Activated CD8-positive, alpha-beta T cell treated with anti-CD3 and anti-CD28 coated beads for 36 hours (primary cell): ENCODE measurements at regions of chr14 and their contacts with region 1.

Region 1: DNA sequence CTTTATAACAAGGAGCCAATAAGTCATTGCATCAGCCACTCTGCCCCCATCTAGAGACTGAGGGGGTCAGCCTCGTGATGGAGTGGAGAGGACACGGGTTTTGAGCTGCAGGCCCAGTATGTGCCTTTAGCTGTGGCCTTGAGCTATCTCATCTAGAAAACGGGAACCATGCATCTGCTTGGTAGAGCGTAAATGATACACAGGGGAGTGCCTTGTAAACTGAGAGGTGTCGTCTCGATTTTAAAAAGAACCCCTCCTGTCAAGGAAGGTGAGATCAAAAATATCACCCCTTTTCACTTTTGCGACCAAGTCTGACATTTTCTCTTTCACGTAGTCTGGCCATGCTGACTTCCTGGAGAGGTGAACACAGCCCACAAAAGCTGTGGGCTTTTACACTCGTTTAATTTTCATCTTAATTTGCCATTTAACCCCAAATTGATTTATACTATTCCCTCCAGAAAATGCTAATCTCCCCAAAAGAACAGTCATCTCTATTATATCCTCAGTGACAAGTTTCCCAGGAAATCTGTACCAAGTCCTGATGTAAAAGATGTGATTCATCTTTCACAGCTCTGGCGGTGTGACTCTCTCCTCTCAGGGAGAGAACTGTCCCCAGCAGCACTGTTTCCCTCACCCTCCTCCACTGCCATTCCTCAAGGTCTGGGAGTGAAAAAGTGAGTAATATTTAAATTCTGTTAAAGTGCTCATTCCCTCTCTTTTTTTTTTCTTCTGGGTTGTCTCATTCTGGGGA is 30.6 kb downstream of the VCPKMT start:
- DNase-seq: peak; percentile 62
- ATAC-seq: peak; percentile 24
- H3K4me3 Mint-ChIP-seq: peak overlapping the region; percentile 56
- H3K27ac Mint-ChIP-seq: peak overlapping the region; percentile 98
- H3K4me1 Mint-ChIP-seq: peaks cover 94% of the 10 kb centered on the region
- H3K27me3 Mint-ChIP-seq: no peaks in the 10 kb centered on the region
- CTCF ChIP-seq: no peak

Region 2: DNA sequence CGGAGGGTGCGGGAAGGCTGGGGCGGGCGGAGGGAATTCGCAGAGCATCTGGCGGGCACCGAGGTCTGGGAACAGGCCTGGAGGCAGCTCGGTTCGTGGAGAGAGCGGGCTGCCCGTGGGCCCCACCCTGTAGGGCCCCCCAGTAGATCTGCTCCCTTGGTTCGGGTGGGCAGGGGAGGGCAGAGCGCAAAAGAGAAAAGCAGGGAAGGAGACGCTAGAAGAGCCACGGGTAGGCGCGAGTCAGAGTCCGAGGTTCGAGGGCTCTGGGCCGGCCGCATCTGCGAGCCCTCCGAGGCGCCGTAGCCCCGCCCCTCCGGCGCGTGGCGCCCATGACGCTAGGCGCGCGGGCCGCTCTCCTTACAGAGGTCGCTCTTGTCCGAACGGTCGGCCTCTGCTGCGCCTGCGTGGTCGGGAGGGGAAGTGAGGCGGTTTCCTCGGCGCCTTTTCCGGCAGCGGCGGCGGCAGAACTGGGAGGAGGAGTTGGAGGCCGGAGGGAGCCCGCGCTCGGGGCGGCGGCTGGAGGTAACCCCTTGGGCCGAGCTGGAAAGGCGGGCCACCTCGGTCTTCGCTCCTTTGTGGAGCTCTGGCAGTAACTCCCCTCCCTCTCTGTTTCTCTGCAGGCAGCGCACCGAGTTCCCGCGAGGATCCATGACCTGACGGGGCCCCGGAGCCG is 193.0 kb before region 1 on chr14 and contains the start of gene ARF6:
- CTCF ChIA-PET with region 1: no interaction called
- POLR2A ChIA-PET with region 1: interaction called, 14 read pairs
- intact Hi-C with region 1: loop called (anchors 5 kb)
- DNase-seq: peak; percentile 98
- ATAC-seq: peak; percentile 80
- H3K4me3 Mint-ChIP-seq: peak within 1 kb of the TSS; percentile 88
- H3K27ac Mint-ChIP-seq: peak within 1 kb of the TSS; percentile 97
- H3K4me1 Mint-ChIP-seq: peaks cover 4% of the 10 kb centered on the region
- H3K27me3 Mint-ChIP-seq: no peaks in the 10 kb centered on the region
- CTCF ChIP-seq: no peak
- total RNA-seq, gene ARF6: 170 TPM

Region 3: DNA sequence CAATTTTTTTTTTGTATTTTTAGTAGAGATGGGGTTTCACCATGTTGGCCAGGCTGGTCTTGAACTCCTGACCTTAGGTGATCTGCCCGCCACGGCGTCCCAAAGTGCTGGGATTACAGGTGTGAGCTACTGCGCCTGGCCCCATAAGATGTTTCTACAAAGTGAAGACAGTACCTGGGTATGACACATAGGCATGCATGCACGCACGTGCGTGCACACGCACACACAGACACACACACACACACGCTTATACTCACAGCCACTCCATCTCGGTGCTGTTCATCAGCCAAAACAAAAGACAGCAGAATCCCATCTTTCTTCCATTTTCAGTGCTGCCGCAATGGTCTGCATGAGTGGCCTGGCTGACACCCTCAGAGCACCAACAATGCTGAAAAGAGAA is 33.2 kb before region 1 on chr14:
- CTCF ChIA-PET with region 1: no interaction called
- POLR2A ChIA-PET with region 1: no interaction called
- intact Hi-C with region 1: no loop called
- DNase-seq: no peak
- ATAC-seq: no peak
- H3K4me3 Mint-ChIP-seq: no peak overlapping the region
- H3K27ac Mint-ChIP-seq: no peak overlapping the region
- H3K4me1 Mint-ChIP-seq: peaks cover 16% of the 10 kb centered on the region
- H3K27me3 Mint-ChIP-seq: no peaks in the 10 kb centered on the region
- CTCF ChIP-seq: no peak

Region 4: DNA sequence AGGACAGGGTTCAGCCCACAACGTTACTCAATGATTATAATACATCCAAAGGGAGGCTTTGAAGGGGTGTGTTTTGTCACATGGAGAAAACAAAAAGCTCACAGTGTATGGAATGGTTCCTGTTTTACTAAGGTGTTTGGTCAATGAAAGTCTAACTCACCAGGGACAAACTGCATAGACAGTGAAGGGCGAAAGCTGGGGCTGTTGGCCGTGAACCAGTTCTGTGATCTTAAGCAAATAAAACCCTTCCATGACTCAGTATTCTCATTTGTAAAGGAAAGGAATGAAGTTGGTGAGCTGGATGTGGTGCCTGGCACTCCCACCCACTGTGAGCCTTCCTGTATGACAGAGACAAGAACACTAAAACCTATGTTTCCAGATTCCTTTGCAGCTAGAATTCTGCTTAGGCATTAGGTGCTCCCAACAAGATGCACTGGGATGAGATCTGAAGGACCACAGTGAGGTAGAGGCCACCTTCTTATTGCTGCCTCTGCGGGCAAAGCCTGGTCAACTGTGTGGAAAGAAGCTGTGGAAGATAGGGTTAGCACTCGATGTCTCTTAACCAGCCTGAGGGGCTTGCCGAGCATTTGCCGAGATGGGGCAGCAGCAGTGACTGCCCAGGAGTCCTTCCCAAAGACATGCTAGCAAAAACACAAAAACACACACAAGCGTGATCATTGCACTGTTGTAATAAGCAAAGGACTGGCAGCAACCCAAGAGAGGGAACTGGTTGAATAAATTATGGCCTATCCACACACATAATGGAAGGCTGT is 17.8 kb before region 1 on chr14:
- CTCF ChIA-PET with region 1: interaction called, 12 read pairs
- POLR2A ChIA-PET with region 1: interaction called, 39 read pairs
- intact Hi-C with region 1: no loop called
- DNase-seq: no peak
- ATAC-seq: no peak
- H3K4me3 Mint-ChIP-seq: no peak overlapping the region
- H3K27ac Mint-ChIP-seq: peak overlapping the region; percentile 16
- H3K4me1 Mint-ChIP-seq: peaks cover 75% of the 10 kb centered on the region
- H3K27me3 Mint-ChIP-seq: no peaks in the 10 kb centered on the region
- CTCF ChIP-seq: no peak

Region 5: DNA sequence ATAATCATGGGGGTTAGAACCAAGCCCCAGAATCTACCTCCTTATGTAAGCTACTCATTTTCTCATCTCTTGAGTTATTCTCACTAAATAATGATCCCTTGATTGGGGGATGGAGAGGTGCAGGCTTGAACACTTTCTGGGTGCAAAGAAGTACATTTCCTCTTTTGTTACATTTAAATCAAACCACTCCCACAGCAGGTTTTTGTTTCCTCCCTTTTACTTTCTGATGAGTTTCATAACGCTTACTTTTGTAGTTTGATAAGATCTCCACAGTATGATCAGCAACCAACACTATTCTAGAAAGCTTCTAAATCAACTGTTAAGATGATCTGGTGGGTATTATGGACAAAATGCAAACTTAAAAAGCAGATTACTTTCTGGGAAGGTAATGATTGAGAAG is 10.2 kb after region 1 on chr14:
- CTCF ChIA-PET with region 1: interaction called, 51 read pairs
- POLR2A ChIA-PET with region 1: interaction called, 13 read pairs
- intact Hi-C with region 1: no loop called
- DNase-seq: no peak
- ATAC-seq: peak; percentile 60
- H3K4me3 Mint-ChIP-seq: peak overlapping the region; percentile 31
- H3K27ac Mint-ChIP-seq: peak overlapping the region; percentile 87
- H3K4me1 Mint-ChIP-seq: peaks cover 81% of the 10 kb centered on the region
- H3K27me3 Mint-ChIP-seq: no peaks in the 10 kb centered on the region
- CTCF ChIP-seq: no peak

Region 6: DNA sequence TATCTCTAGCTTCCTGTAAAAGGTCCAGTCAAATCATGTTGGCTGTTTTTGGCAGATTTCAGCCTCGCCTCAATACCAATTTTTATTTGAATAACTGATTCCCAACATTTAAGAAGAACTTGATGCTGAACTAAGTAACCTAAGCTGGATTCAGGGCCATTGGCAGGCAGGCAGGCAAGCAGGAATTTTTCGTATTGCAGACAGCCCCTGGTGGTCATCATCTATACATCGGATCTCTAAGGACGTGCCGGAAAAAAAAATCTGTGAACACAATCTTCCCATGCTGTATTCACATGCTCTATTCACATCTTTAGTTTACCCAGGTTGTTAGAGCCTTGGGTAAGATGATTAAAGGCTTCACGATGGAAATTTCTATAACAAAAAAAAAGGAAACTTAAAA is 23.6 kb after region 1 on chr14:
- CTCF ChIA-PET with region 1: interaction called, 51 read pairs
- POLR2A ChIA-PET with region 1: interaction called, 5 read pairs
- intact Hi-C with region 1: no loop called
- DNase-seq: no peak
- ATAC-seq: no peak
- H3K4me3 Mint-ChIP-seq: no peak overlapping the region
- H3K27ac Mint-ChIP-seq: no peak overlapping the region
- H3K4me1 Mint-ChIP-seq: peaks cover 37% of the 10 kb centered on the region
- H3K27me3 Mint-ChIP-seq: no peaks in the 10 kb centered on the region
- CTCF ChIP-seq: no peak

Region 7: DNA sequence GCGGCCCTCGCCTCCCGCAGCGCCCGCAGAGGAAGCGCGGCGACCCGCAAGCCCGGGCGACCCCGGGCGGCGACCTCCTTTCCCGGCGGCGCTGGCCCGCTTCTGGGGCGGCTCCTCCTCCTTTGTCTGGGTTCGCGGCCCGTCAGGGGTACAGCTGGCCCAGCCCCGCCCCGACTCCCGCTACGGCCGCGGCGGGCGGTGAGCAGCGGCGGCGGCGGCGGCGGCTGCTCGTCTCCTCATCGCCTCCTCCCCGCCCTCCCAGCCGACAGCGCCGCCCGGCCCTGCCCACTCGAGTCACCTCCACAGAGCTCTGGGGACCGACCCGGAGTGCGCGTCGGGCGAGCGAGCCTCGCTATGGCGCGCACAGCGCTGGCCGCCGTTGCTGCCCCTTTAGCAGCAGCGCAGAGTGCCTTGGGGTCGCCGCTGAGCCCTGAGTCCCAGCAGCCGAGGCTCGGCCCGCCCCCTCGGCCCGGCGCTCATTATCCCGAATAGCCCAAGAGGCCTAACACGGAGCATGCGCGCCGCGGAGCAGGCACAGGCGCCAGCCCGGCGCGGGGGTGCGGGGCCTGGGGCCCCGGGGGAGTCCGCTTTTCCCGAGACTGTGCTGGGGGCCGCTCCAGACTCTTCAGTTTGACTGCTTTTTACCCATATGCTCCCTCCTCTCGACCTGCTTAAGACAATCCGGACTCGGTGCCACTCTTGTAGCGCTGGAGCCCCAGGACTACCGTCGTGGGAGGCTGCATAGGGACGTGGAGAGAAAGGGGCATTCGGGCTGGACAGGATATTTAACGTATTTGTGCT is 145.9 kb after region 1 on chr14 and contains the start of gene SOS2:
- CTCF ChIA-PET with region 1: no interaction called
- POLR2A ChIA-PET with region 1: no interaction called
- intact Hi-C with region 1: no loop called
- DNase-seq: peak; percentile 81
- ATAC-seq: peak; percentile 77
- H3K4me3 Mint-ChIP-seq: peak within 1 kb of the TSS; percentile 84
- H3K27ac Mint-ChIP-seq: peak within 1 kb of the TSS; percentile 91
- H3K4me1 Mint-ChIP-seq: peaks cover 33% of the 10 kb centered on the region
- H3K27me3 Mint-ChIP-seq: no peaks in the 10 kb centered on the region
- CTCF ChIP-seq: no peak
- total RNA-seq, gene SOS2: 14.7 to 16.4 TPM